PC-9 (cell line): ENCODE measurements at regions of chr10 and their contacts with region 1.

Region 1: GRCh38 chr10:118754720-118755480 is at the start of gene CACUL1:
- DNase-seq: peak; percentile 91 to 98
- H3K4me3 ChIP-seq: peak within 1 kb of the TSS; percentile 96
- H3K27ac ChIP-seq: peak within 1 kb of the TSS; percentile 69
- H3K4me1 ChIP-seq: peaks cover 10% of the 10 kb centered on the region; the same call in 1 of the 2 replicates
- H3K27me3 ChIP-seq: no peaks in the 10 kb centered on the region
- CTCF ChIP-seq: no peak
- total RNA-seq, gene CACUL1: 49.4 and 62.5 TPM in 2 replicates

Region 2: GRCh38 chr10:118808601-118809356 is 53.9 kb after region 1 on chr10:
- CTCF ChIA-PET with region 1: no interaction called
- POLR2A ChIA-PET with region 1: no interaction called
- intact Hi-C with region 1: no loop called
- DNase-seq: no peak
- H3K4me3 ChIP-seq: no peak overlapping the region
- H3K27ac ChIP-seq: no peak overlapping the region
- H3K4me1 ChIP-seq: no peaks in the 10 kb centered on the region
- H3K27me3 ChIP-seq: no peaks in the 10 kb centered on the region
- CTCF ChIP-seq: no peak

Region 3: DNA sequence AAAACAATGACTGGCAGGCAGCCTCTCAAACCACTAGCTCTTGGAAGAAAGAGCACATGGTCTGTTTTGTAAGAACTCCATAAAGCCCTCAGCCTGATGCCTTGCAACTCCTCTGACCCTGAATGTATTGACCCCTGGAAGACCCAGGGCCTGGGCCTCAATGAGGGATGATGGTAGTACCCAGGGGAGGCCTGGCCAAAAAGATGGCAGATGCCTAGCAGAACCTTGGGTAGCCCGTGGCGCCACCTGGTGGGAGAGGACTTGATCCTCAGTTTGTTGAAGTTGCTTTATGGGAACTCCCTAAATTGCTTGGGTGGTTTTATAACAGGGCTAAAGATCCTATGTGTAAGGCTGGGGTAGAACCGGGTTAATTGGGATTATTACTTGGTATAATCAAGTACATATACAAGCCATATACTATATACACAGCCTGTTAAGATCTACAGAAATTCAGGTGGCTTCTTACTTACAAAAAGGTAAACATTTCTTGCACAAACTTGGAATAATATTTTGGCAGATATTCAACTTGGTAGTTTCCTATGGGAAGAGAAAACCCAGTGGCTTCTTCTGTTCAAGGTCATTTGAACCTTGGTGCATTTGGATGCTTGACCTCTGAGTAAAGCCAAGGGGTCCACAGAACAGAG is 95.6 kb after region 1 on chr10:
- CTCF ChIA-PET with region 1: no interaction called
- POLR2A ChIA-PET with region 1: no interaction called
- intact Hi-C with region 1: loop called (anchors 10 kb)
- DNase-seq: peak in 1 of 2 experiments; percentile 47
- H3K4me3 ChIP-seq: no peak overlapping the region
- H3K27ac ChIP-seq: no peak overlapping the region
- H3K4me1 ChIP-seq: no peaks in the 10 kb centered on the region
- H3K27me3 ChIP-seq: no peaks in the 10 kb centered on the region
- CTCF ChIP-seq: peak; percentile 74

Region 4: DNA sequence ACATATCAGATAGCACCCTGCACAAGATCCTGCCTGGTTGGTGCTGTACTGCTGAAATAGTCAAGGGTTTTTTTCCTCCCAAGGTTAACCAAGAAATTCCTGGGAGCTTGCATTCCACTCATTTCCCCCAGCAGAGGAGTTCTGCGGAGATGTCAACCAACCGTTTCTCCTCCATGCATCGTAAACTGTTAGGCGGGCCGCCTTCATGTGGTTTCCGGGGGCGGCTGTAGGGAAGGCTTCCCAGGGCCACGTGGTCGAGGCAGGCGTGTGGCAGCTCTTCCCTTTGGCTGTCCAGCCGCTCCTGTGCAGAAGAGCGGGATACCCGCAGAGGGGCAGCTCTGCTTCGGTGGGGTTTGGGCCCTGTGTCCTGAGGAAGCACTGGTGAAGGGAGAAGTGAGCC is 673.9 kb after region 1 on chr10:
- CTCF ChIA-PET with region 1: no interaction called
- POLR2A ChIA-PET with region 1: no interaction called
- intact Hi-C with region 1: no loop called
- DNase-seq: no peak
- H3K4me3 ChIP-seq: no peak overlapping the region
- H3K27ac ChIP-seq: no peak overlapping the region
- H3K4me1 ChIP-seq: no peaks in the 10 kb centered on the region
- H3K27me3 ChIP-seq: no peaks in the 10 kb centered on the region
- CTCF ChIP-seq: no peak